PC-3 (cell line): ENCODE measurements at regions of chr7 and their contacts with region 1.

Region 1: GRCh38 chr7:117338020-117338419 is 15.2 kb upstream of the WNT2 start:
- DNase-seq: peak; percentile 5
- ATAC-seq: peak; percentile 64; the same call in 1 of the 2 replicates
- H3K4me3 ChIP-seq: no peak overlapping the region
- H3K27ac ChIP-seq: no peak overlapping the region
- H3K4me1 ChIP-seq: no peaks in the 10 kb centered on the region
- H3K27me3 ChIP-seq: peaks cover 19% of the 10 kb centered on the region; the same call in 1 of the 2 replicates
- CTCF ChIP-seq: peak; percentile 33; the same call in 1 of the 2 replicates

Region 2: DNA sequence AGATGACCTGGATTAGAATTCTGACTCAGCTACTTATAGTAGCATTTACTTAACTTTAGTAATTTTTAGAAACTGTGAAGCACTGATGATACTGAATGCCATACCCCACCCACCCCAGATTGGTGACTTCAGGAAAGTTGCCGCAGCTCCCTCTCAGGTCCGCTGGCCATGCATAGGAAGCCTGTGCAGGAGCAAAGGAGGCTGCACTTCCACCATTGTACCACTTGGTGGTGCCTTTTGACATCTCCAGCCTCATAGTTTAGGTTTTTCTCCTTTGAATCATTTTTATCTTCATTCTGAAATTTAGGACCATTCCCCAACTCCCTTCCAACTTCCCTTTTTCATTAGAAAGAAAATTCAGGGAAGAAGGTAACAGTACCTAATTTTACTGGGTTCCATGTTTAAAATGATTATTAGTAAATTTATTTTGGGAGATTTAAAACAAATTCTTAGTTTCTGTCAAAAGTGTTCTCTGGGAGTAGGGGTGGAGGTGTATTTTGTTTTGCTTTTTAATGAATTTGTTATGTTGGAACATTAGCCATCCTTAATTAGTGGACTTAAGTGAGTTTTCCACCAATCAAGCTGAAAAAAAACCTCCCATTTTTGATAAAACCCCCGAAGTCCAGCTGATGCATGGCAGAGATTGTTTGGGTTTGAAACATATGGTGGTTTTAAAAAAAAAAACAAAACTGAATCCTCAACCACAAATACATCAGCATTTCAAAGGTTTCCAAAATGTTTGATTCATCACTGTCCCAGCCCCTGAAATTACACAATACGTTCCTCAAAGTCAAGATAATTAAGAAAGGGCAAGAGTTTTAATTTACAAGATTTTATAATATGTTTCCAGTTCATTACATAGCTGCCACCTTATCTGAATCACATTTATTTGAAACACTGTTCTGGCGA is 124.8 kb before region 1 on chr7:
- CTCF ChIA-PET with region 1: interaction called, 5 read pairs
- POLR2A ChIA-PET with region 1: no interaction called
- intact Hi-C with region 1: loop called (anchors 1 kb)
- DNase-seq: peak; percentile 78
- ATAC-seq: peak; percentile 70
- H3K4me3 ChIP-seq: no peak overlapping the region
- H3K27ac ChIP-seq: no peak overlapping the region
- H3K4me1 ChIP-seq: no peaks in the 10 kb centered on the region
- H3K27me3 ChIP-seq: no peaks in the 10 kb centered on the region
- CTCF ChIP-seq: peak; percentile 93